ENCODE measurements at regions of chr16 and their contacts with region 1.

Region 1: DNA sequence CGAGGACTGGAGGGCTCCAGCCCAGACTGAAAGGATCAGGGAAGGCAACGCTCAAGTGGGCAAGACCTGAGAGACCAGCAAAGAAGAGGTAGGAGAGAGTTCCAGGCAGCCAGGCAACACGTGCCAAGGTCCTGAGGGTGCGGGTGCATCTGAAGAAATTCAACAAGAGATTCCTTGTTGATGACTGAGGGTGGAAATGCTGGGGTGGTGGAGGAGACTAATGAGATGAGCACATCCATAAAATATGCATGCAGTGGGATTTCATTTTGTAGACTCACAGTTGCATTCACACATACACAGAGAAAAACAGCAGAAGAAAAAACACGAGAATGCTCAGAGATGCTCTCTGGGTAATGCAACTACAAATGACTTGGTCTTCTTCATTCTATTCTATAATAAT is 154.8 kb upstream of the FOXF1 start:
- DNase-seq: peak; percentile 93
- ATAC-seq: peak; percentile 65
- H3K4me3 ChIP-seq: no peak overlapping the region
- H3K27ac ChIP-seq: peak overlapping the region; percentile 99
- H3K4me1 ChIP-seq: peaks cover 22% of the 10 kb centered on the region
- H3K27me3 ChIP-seq: no peaks in the 10 kb centered on the region
- CTCF ChIP-seq: no peak
- POLR2A ChIP-seq: no peak
- RAD21 ChIP-seq: no peak

Region 2: GRCh38 chr16:86033016-86033474 is 322.5 kb before region 1 on chr16:
- CTCF ChIA-PET with region 1: no interaction called
- POLR2A ChIA-PET with region 1: no interaction called
- dilution Hi-C with region 1: no loop called
- in situ Hi-C with region 1: no loop called
- intact Hi-C with region 1: no loop called
- DNase-seq: no peak
- ATAC-seq: peak; percentile 40
- H3K4me3 ChIP-seq: no peak overlapping the region
- H3K27ac ChIP-seq: no peak overlapping the region
- H3K4me1 ChIP-seq: peaks cover 9% of the 10 kb centered on the region; the same call in 1 of the 2 replicates
- H3K27me3 ChIP-seq: peaks cover 51% of the 10 kb centered on the region
- CTCF ChIP-seq: no peak
- POLR2A ChIP-seq: no peak
- RAD21 ChIP-seq: no peak

Region 3: DNA sequence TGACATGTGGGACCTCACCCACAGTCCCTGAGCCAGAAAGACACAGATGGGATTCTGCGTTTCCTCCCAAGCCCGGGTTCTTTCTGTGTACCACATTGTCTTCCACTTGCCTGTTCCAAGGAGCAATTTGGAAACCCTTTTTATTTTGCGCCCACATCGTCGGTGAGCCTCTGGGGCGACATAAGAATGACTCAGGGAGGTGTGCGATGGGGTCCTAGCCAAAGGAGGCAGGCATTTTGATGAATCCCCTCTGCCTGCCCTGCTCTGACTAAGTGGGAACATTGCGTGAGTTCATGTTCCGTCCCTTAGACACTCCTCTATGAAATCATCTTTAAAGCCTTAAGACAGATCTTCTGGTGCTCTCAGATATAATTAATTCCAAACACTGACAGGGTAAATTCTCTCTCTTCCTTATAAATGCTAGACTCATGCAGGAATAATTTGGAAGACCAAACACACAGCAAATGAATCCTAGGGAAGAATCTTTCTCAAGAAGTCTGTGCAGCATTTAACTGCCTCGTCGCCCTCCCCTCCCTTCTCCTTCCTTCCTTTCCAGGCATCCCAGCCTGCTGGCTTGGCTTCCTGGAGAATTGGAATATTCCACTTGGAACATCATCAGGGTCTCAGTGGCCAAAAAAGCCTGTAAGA is 102.1 kb after region 1 on chr16:
- CTCF ChIA-PET with region 1: no interaction called
- POLR2A ChIA-PET with region 1: no interaction called
- dilution Hi-C with region 1: no loop called
- in situ Hi-C with region 1: no loop called
- intact Hi-C with region 1: loop called (anchors 1 kb)
- DNase-seq: peak; percentile 99
- ATAC-seq: peak; percentile 61
- H3K4me3 ChIP-seq: no peak overlapping the region
- H3K27ac ChIP-seq: peak overlapping the region; percentile 97
- H3K4me1 ChIP-seq: peaks cover 28% of the 10 kb centered on the region
- H3K27me3 ChIP-seq: no peaks in the 10 kb centered on the region
- CTCF ChIP-seq: no peak
- POLR2A ChIP-seq: peak; percentile 72
- RAD21 ChIP-seq: no peak; the same call in 1 of the 2 replicates

Measured in IMR-90 (cell line).